Lower lobe of right lung (tissue), 2 donors: ENCODE measurements at regions of chr5 and their contacts with region 1.

Region 1: DNA sequence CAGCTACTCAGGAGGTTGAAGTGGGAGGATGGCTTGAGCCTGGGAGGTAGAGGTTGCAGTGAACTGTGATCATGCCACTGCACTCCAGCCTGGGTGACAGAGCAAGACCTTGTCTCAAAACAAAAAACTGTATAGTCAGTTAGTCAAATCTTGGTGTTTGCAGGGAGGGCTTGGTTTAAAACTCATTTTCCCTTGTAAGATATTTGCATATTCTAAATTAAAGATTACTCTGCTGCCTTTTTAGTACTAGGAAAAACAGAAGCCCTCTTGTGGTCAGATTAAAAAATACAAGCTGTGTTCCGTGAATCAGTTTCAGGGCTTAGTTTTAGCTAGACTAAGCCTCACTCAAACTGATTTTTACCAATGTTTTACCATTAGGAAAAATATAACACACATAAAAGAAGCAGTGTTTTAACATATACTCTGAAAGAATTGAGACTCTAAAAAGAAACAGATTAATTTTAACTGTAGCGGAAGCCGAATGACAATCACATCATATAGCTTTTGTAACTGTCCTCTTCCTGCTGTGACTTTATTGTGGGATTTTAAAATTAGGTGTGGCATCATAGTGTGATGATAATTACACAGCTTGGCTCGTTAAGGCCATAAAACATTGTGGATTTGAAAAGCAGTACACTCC is 84.9 kb upstream of the BASP1 start:
- DNase-seq: no peak
- ATAC-seq: no peak
- H3K4me3 ChIP-seq: no peak overlapping the region
- H3K27ac ChIP-seq: no peak overlapping the region
- H3K4me1 ChIP-seq: peaks cover 8% of the 10 kb centered on the region
- H3K27me3 ChIP-seq: no peaks in the 10 kb centered on the region
- CTCF ChIP-seq: peak; percentile 62

Region 2: DNA sequence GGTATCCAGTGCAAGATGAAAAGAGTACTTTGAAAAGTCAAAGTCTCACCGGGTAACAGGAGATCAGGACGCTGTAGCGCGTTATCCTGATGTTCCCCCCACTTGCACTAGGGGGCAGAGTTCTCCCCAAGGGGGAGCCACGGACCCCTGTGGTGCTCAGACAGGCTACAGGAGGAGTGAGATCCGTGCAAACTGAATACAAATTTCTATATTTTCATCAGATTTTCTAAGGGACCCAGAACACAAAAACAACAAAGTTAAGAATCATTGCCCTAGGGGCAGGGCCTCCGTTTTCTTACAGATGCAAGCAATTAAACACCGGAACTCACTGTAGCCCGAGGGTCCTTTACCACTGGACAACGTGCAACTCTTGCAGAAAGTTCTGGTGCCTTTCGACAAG is 198.4 kb before region 1 on chr5:
- intact Hi-C with region 1: loop called (anchors 10 kb)
- DNase-seq: peak; percentile 67
- ATAC-seq: peak; percentile 46 to 52
- H3K4me3 ChIP-seq: peak overlapping the region; percentile 76
- H3K27ac ChIP-seq: no peak overlapping the region
- H3K4me1 ChIP-seq: peaks cover 57% of the 10 kb centered on the region
- H3K27me3 ChIP-seq: no peaks in the 10 kb centered on the region
- CTCF ChIP-seq: peak; percentile 90

Region 3: GRCh38 chr5:17290055-17290974 is 157.8 kb after region 1 on chr5:
- intact Hi-C with region 1: no loop called
- DNase-seq: no peak
- ATAC-seq: peak in 1 of 2 donors; percentile 53
- H3K4me3 ChIP-seq: no peak overlapping the region
- H3K27ac ChIP-seq: no peak overlapping the region
- H3K4me1 ChIP-seq: no peaks in the 10 kb centered on the region
- H3K27me3 ChIP-seq: no peaks in the 10 kb centered on the region
- CTCF ChIP-seq: no peak

Region 4: GRCh38 chr5:17340816-17341215 is 208.3 kb after region 1 on chr5:
- intact Hi-C with region 1: no loop called
- DNase-seq: no peak
- ATAC-seq: peak; percentile 62 to 66
- H3K4me3 ChIP-seq: no peak overlapping the region
- H3K27ac ChIP-seq: no peak overlapping the region
- H3K4me1 ChIP-seq: peaks cover 7% of the 10 kb centered on the region
- H3K27me3 ChIP-seq: no peaks in the 10 kb centered on the region
- CTCF ChIP-seq: no peak